GM18951 (cell line): ENCODE measurements at regions of chr2 and their contacts with region 1.

Region 1: DNA sequence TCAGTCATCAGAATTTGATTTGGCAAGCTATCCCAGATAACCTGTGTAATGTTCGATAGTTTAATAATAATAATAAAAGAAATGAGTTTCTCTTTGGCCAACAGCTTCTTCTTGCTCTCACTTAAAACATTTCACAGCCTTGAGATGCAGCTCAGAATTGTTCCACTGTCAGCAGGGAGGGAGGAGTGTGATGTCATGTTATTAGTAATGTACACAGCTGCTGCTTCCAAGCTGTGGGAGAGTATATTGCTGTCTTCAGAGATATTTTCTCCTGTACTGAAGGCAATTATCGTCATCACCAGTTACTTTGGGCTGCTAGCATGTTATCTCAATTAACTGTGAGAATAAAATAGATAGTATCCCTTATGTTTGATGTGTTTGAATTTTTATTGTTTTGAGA is 146.9 kb upstream of the MAP3K20 start:
- POLR2A ChIP-seq: no peak

Region 2: GRCh38 chr2:172864182-172864581 is 64.6 kb before region 1 on chr2:
- in situ Hi-C with region 1: loop called (anchors 10 kb)
- POLR2A ChIP-seq: no peak

Region 3: GRCh38 chr2:173402405-173402974 is 473.7 kb after region 1 on chr2:
- in situ Hi-C with region 1: no loop called
- POLR2A ChIP-seq: no peak

Region 4: DNA sequence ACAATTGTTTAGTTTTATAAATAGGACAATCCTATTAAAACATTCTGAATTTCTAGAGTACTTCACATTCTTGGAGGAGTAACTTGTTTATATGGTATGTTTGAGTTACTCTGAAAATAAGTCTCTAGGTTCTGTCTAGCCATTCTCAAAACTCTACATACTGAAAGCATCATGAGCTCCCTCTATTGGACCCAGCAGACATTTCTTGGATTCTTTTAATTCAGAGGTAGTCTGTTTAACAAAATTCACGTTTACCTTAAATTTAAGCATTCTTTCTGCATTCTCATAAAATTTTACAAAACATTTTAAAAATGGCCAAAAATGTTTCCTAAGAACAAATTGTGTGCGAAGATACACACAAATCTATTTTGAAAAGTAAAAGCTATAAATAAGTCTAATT is 1421.3 kb after region 1 on chr2:
- in situ Hi-C with region 1: no loop called
- POLR2A ChIP-seq: no peak